Naive thymus-derived CD8-positive, alpha-beta T cell (primary cell): ENCODE measurements at regions of chr17 and their contacts with region 1.

Region 1: DNA sequence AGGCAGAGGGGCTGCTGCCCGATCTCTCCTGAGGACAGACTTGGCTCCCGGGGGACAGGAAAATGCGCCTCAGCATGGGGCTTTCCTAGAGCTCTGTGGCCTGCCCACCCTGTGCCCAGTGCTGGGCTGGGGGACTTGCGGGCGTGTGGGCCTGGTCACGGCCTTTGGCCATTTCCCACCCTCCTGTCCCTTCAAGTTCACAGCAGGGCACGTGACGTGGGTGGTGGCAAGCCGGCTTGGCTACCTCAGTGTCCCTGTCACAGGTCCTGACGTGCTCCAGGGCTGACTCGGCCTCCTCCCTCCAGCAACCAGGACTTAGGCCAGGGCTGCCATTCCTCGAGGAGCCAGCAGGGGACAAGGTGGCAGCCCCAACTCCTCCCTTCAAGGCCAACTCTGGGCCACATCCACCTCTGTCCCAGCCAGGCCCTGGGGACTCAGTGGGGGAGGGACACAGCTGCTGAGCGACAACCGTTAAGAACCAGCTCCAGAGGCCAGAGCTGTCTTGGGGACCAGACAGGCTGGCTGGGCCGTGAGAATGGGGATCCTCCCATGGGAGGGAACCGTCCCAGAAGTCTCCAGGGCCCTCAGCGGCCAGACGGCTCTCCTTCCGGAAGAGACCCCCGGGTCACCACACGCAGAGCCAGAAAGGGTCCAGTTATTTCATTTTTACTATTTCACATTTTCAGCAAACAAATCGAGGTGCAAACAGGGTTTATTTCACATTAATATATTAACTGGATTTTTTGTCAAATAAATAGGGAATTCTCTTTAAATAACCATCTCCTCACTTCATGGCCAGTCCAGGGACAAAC is 1.1 kb upstream of the UNC13D start:
- DNase-seq: peak in 7 of 10 donors; percentile 40 to 77 (median 51)
- ATAC-seq: peak; percentile 42 to 43
- H3K4me3 Mint-ChIP-seq: peak overlapping the region in 9 of 10 donors; percentile 22 to 63 (median 45)
- H3K27ac Mint-ChIP-seq: peak overlapping the region; percentile 47 to 92 (median 80)
- H3K4me1 Mint-ChIP-seq: peaks cover 9 to 36% (median 28%) of the 10 kb centered on the region in 4 donors
- H3K27me3 Mint-ChIP-seq: no peaks in the 10 kb centered on the region

Region 2: DNA sequence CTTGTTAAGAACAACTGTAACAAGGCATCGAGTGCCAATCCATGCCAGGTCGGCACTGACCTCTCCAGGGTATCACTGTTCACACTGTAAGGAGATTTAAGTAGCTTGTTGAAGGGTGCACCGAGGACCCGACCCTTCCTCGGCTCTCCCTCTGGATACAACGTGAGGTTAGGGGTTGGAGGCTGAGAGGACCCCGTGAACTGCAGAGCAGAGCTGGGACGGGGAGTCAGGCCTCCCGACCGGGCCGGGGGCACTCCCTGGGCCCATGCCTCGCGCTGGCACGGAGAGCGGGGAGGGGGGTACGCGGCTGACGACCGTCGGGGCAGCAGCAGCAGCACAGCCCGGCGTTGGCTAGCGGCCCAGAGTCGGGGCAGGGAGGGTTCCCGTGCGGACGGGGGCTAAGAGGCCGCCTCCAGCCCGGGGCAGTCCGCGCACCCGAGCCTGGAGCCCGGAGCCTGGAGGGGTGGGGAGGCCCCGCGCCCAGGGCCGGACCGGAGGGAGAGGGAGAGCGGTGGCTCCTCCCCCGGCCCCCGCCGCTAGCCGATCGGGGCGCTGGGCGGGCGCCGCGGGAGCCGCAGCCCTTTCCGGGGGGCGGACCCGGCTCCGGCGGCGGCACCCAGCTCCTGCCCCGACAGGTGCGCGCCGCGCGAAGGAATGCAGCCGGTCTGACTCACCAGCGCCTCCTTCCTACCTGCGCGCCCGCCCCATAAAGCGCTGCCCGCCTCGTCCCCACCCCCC is 124.4 kb before region 1 on chr17 and contains the start of gene ITGB4:
- POLR2A ChIA-PET with region 1: no interaction called
- DNase-seq: peak; percentile 53 to 84 (median 66)
- ATAC-seq: peak; percentile 95 to 96
- H3K4me3 Mint-ChIP-seq: peak within 1 kb of the TSS; percentile 75 to 88 (median 85)
- H3K27ac Mint-ChIP-seq: peak within 1 kb of the TSS in 5 of 10 donors; percentile 33 to 83 (median 77)
- H3K4me1 Mint-ChIP-seq: peaks cover 2 to 7% (median 4%) of the 10 kb centered on the region in 4 donors
- H3K27me3 Mint-ChIP-seq: peaks cover 0 to 12% (median 1%) of the 10 kb centered on the region in 5 donors
- polyA plus RNA-seq, gene ITGB4: 0.35 to 1.9 (median 1.4) TPM

Region 3: DNA sequence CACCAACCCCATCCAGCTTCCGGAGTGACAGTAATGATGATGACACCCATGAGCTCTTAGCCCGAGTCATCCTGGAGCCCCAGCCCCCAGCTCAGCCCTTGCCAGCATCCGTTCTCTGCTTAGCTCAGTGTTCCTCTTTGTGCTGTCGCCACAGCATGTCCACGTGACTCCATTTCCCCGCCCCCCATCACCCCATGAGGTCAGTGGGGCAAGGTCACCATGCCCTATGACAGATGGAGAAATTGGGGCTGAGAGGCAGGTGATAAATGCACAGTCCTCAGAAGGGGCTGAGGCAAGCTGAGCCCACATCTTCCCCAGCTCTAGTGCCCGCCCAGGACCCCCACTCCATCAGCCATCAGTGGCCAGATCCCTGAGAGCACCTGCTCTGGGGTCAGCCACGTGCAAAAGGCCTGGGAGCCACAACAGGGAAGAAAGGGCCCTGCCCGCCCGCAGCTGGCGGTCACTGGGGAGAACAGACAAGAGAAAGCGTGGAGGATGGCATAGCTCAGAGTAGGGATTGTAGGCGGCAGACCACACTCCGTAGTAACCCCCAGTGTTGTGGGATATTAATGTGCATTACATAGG is 106.9 kb before region 1 on chr17:
- POLR2A ChIA-PET with region 1: no interaction called
- DNase-seq: no peak
- ATAC-seq: no peak
- H3K4me3 Mint-ChIP-seq: no peak overlapping the region
- H3K27ac Mint-ChIP-seq: peak overlapping the region in 1 of 10 donors; percentile 53
- H3K4me1 Mint-ChIP-seq: peaks cover 0 to 6% (median 4%) of the 10 kb centered on the region in 4 donors
- H3K27me3 Mint-ChIP-seq: peaks cover 0 to 7% (median 0%) of the 10 kb centered on the region in 5 donors

Region 4: DNA sequence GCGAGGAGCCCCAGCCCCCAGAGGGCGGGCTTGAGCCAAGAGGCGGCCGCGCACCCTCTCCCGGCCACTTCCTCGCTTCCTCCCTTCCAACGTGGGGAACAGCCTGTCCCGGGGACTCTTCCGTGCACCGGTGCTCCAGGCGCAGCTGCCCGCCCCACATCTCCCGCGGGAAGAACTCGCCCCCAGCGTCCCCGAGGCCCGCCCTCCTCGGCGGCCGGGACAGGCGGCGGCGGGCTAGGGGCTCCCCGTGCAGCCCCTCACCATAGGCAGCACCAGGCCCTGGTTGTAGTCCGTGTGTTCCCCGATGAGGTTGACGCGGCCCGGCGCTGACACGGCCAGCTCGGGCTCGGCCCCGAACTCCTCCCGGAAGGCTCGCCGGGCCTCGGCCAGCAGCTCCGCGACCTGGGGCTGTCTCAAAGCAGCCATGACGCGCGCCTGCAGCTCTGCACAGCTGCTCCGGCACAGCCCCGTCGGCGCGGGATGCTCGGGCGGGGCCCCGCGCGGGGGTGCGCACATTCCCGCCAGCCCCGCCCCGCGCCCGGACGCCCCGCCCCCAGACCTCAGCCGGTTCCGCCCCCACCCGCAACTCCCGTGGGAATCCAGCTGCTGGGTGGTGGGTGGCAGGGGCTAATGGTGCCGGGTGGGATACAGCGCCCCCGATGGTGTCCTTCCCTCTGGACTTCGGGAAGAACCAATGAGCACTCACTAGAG is 80.4 kb before region 1 on chr17 and contains the start of gene GALK1:
- POLR2A ChIA-PET with region 1: interaction called, 26 read pairs
- DNase-seq: peak; percentile 50 to 83 (median 68)
- ATAC-seq: peak; percentile 92 to 93
- H3K4me3 Mint-ChIP-seq: peak within 1 kb of the TSS; percentile 68 to 84 (median 75)
- H3K27ac Mint-ChIP-seq: peak within 1 kb of the TSS in 9 of 10 donors; percentile 31 to 84 (median 60)
- H3K4me1 Mint-ChIP-seq: peaks cover 1 to 23% (median 16%) of the 10 kb centered on the region in 4 donors
- H3K27me3 Mint-ChIP-seq: no peaks in the 10 kb centered on the region
- polyA plus RNA-seq, gene GALK1: 9.5 to 14.4 (median 13.9) TPM

Region 5: DNA sequence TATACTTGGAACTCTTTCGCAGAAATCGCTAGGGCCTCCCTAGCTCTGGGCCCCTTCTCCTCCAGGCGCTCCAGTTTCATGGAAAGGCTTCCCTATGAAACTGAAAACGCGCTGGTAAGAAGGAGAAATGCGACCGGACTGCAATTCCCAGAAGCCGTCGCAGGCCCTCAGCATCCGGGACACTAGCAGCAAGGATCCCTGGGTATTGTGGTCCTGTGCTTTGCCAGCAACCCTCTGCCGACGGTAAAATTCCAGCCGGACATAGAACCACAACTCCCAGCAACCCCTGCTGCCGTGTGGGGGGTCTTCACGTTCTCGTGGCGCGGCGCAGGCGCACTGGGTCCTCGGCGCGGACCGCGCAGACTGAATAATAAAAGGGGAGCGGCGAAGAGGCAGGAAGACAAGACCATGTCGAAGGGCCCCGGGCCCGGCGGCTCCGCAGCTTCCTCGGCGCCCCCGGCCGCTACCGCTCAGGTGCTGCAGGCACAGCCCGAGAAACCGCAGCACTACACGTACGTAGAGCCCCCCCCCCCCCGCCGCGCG is 60.7 kb before region 1 on chr17 and contains the start of gene UNK:
- POLR2A ChIA-PET with region 1: interaction called, 122 read pairs
- DNase-seq: peak; percentile 85 to 99 (median 95)
- ATAC-seq: peak; percentile 71 to 76
- H3K4me3 Mint-ChIP-seq: peak within 1 kb of the TSS; percentile 86 to 97 (median 92)
- H3K27ac Mint-ChIP-seq: peak within 1 kb of the TSS; percentile 94 to 100 (median 100)
- H3K4me1 Mint-ChIP-seq: peaks cover 21 to 72% (median 49%) of the 10 kb centered on the region in 4 donors
- H3K27me3 Mint-ChIP-seq: peaks cover 0 to 4% (median 0%) of the 10 kb centered on the region in 5 donors
- polyA plus RNA-seq, gene UNK: 24.4 to 26.9 (median 26.2) TPM

Region 6: DNA sequence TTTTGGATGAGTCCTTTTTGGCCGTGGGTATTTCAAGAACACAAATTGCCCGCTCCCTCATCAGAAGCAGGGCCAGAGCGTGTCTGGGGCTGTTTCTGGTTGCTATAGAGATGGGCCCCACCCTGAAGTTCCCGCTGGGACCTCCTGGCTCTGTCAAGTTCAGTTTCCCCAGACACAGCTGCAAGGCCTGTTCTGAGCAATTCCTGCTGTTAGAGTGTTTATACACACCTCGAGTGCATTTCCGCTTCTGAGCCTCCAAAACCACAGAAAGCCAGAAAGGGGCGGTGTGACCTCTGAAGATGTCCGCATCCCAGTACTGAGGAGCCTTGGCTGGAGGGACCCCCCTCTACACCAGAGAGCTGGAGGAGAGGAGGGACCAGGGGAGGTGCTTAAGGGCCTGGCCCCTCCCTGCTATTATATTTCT is 19.2 kb after region 1 on chr17:
- POLR2A ChIA-PET with region 1: interaction called, 17 read pairs
- DNase-seq: peak in 3 of 10 donors; percentile 26 to 41 (median 37)
- ATAC-seq: peak; percentile 70 to 79
- H3K4me3 Mint-ChIP-seq: peak overlapping the region in 7 of 10 donors; percentile 14 to 50 (median 36)
- H3K27ac Mint-ChIP-seq: peak overlapping the region; percentile 47 to 90 (median 72)
- H3K4me1 Mint-ChIP-seq: peaks cover 9 to 30% (median 23%) of the 10 kb centered on the region in 4 donors
- H3K27me3 Mint-ChIP-seq: no peaks in the 10 kb centered on the region

Region 7: GRCh38 chr17:75896415-75897159 is 51.3 kb after region 1 on chr17 and contains the start of gene TRIM65:
- POLR2A ChIA-PET with region 1: interaction called, 21 read pairs
- DNase-seq: peak; percentile 56 to 84 (median 76)
- ATAC-seq: peak; percentile 84 to 87
- H3K4me3 Mint-ChIP-seq: peak within 1 kb of the TSS; percentile 75 to 87 (median 82)
- H3K27ac Mint-ChIP-seq: peak within 1 kb of the TSS; percentile 77 to 92 (median 86)
- H3K4me1 Mint-ChIP-seq: peaks cover 19 to 28% (median 26%) of the 10 kb centered on the region in 4 donors
- H3K27me3 Mint-ChIP-seq: no peaks in the 10 kb centered on the region
- polyA plus RNA-seq, gene TRIM65: 13.4 to 31.8 (median 18.9) TPM